ENCODE measurements at regions of chr12 and their contacts with region 1.

Region 1: DNA sequence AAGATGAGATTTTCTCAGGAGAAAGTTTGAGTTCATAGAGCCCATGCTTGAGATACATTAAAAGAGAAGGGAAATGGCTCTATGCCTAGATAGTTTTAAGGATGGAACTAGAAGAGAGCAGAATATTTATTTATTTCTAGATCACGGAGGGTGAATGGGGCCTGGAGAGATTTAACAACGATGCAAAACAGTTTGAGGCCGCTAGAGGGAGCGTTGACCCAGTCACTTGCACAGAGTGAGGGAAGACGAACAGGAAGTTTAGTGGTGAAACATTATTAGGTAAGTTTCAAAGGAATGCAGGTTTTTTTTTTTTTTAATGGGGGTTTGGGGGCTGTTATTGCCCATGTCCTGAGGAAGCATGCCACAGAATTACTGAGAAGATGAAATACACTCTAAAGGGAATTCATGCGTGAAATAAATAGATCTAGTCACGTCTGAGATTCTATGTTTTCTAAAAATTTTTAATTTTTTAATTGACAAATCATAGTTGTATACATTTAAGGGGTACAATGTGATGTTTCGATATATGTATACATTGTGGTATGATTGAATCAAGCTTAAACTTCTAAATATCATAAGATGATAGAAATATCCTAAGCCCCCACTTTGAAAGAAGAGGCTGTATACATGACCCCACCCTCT is 14.8 kb upstream of the PPP1R1A start:
- DNase-seq: peak in 1 of 2 experiments; percentile 72
- H3K4me3 ChIP-seq: no peak overlapping the region
- H3K27ac ChIP-seq: no peak overlapping the region
- H3K4me1 ChIP-seq: no peaks in the 10 kb centered on the region
- H3K27me3 ChIP-seq: peaks cover 0 to 8% (median 2%) of the 10 kb centered on the region in 4 experiments; a peak in 3 of 7 replicates
- CTCF ChIP-seq: peak; percentile 73 to 86 (median 82)
- EP300 ChIP-seq: no peak
- POLR2A ChIP-seq: no peak
- RAD21 ChIP-seq: peak; percentile 64 to 76

Region 2: DNA sequence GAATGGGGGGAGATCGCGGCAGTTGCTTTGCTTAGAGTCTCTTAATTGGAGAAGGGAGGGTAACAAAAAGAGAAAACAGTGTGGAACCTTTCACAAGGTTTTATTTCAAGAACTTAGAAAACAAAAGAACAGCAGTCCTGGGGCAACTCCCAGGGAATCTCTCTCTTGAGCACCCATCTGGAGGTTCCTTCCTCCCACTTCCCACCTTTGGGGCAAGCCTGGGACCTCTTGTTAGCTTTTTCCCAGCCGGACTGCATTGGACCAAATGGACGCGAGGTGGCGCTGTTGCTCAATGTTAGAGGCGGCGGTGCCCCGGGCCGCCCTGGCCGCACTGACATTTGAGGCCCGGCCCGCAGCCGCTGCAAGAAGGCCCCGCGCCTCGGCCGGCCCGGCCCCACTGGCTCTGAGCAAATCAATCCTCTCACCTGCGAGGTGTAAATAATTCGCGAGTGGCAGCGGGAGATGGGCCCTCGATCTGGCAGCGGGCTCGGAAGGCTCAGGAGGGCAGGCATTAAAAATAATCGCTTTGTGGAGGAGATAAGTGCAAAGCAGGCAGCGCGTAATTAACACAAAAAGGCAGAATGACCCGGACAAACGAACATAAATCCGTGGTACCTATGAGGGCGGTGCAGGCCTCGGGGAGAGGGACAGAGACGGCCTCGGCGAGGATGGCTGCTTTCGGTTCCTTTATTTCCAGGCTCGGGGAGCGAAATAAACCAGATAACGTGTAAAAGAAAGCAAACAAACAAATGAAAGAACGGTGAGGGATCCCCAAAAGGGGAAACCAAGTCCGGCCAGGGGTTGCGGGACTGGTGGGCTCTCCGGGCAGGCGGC is 597.2 kb before region 1 on chr12:
- CTCF ChIA-PET with region 1: no interaction called
- POLR2A ChIA-PET with region 1: no interaction called
- DNase-seq: peak; percentile 50 to 98
- H3K4me3 ChIP-seq: no peak overlapping the region
- H3K27ac ChIP-seq: no peak overlapping the region
- H3K4me1 ChIP-seq: peaks cover 0 to 4% (median 0%) of the 10 kb centered on the region in 4 experiments; a peak in 2 of 7 replicates
- H3K27me3 ChIP-seq: peaks cover 97 to 100% (median 100%) of the 10 kb centered on the region in 4 experiments
- CTCF ChIP-seq: peak; percentile 88 to 97 (median 89)
- EP300 ChIP-seq: no peak
- POLR2A ChIP-seq: no peak
- RAD21 ChIP-seq: peak; percentile 98

Region 3: DNA sequence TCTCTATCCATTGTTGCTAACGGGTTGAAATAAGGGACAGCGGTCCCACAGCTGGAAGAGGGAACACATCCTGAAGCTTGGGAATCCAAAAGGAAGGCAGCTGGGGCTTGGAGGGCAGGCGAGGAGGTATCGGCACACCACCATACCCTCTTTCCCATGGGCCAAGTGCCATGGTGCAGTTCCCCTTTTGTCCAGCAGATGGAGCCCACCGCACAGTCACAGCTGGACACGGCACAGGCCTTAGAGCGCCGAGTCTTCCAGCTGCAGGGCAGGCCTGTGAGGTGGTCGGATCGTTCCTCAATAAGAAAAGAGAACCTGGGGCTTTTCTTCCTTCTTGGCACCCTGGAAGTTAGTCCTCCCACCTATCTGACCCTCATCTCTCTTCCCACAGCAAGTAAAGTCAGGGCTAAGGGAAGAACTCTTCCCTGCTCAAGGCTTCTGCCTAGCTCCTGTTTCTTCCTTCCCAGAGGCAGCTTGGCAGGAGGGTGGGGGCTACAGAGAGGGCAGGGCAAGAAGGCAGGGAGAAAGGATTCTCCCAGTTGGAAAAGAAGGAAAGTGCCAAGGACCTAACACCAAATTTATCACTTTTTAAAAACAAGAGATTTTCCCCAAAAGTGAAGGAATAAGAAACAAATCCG is 23.5 kb before region 1 on chr12:
- CTCF ChIA-PET with region 1: interaction called, 57 read pairs
- POLR2A ChIA-PET with region 1: no interaction called
- DNase-seq: peak; percentile 67 to 99
- H3K4me3 ChIP-seq: no peak overlapping the region
- H3K27ac ChIP-seq: no peak overlapping the region
- H3K4me1 ChIP-seq: peaks cover 0 to 10% (median 3%) of the 10 kb centered on the region in 4 experiments; a peak in 5 of 7 replicates
- H3K27me3 ChIP-seq: no peaks in the 10 kb centered on the region; a peak in 1 of 7 replicates
- CTCF ChIP-seq: peak; percentile 94 to 100 (median 100)
- EP300 ChIP-seq: no peak
- POLR2A ChIP-seq: no peak
- RAD21 ChIP-seq: peak; percentile 86 to 90

Region 4: DNA sequence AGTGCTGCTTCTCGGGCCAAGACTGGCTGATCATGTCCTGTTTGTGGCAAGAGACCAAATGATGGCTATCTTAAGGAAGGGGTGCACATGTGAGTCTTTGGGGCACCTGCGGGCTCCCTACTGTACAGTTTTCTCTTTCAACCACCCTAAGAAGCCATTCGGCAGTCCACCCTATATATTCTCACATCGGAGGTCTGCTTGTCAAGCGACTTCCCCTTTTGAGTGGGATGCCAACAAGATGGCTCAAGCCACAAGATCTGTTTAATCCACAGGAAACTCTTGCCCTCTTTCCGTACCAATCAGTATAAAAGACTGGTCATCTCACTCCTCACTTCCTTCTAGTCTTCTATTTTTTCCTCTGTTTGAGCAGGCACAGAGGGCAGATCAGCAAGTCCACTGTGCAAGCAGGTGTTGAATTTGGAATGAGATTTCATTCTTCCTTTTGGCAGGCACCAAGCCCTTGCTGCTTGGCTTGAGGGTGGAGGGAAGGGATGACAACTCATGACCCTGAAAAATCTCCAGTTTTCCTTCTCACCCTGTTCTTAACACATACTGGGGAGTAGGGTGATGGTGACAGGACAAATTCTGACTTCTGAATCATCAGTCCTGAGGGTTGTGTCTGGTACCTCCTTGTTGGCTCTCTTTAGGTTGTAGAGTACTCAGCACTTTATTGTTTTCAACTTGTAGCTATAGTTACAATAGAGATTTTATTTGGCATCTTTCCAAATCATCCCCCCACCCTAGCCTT is 13.8 kb after region 1 on chr12:
- CTCF ChIA-PET with region 1: interaction called, 16 read pairs
- POLR2A ChIA-PET with region 1: no interaction called
- DNase-seq: no peak
- H3K4me3 ChIP-seq: no peak overlapping the region
- H3K27ac ChIP-seq: no peak overlapping the region
- H3K4me1 ChIP-seq: no peaks in the 10 kb centered on the region
- H3K27me3 ChIP-seq: peaks cover 5 to 28% (median 16%) of the 10 kb centered on the region in 4 experiments
- CTCF ChIP-seq: no peak
- EP300 ChIP-seq: no peak
- POLR2A ChIP-seq: no peak
- RAD21 ChIP-seq: no peak

Region 5: DNA sequence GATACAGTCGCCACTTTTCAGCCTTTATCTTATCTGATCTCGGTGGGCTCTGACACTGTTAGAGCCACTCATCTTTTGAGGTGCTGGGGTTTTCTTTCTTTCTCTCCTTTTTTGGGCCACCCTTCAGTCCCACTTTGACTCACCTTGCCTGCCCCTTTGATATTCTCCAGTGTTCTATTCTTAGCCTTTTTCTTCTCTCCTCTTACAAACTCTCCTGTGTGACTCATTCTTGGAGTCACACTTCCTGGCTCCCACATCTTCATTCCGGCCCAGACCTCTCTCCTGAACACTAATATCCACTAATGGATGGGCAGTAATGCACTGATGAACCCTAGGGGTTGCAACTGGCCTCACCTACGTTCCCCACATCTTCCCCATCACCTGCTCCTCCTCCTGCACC is 47.1 kb after region 1 on chr12:
- CTCF ChIA-PET with region 1: interaction called, 10 read pairs
- POLR2A ChIA-PET with region 1: no interaction called
- DNase-seq: no peak
- H3K4me3 ChIP-seq: no peak overlapping the region
- H3K27ac ChIP-seq: no peak overlapping the region
- H3K4me1 ChIP-seq: no peaks in the 10 kb centered on the region
- H3K27me3 ChIP-seq: no peaks in the 10 kb centered on the region
- CTCF ChIP-seq: no peak
- EP300 ChIP-seq: no peak
- POLR2A ChIP-seq: no peak
- RAD21 ChIP-seq: no peak

Region 6: DNA sequence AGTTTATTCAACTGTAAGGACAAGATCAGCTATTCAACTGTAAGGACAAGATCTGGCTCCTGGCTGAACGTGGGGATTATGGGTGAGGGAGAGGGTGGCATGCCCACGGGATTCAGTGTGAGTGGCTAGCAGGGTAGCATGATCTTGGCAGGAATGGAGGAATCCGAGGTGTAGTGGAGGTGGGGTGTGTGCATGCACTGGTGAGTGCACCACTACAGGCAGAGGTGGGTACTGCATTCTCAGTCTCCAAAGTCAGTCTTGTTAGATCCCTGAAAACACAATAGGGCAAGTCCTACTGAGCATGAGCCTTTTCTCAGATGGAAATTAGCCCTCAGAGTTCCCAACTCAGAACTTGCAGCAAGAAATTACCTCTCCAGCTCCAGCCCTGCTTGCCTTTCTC is 77.1 kb after region 1 on chr12:
- CTCF ChIA-PET with region 1: interaction called, 13 read pairs
- POLR2A ChIA-PET with region 1: no interaction called
- DNase-seq: peak; percentile 25 to 90
- H3K4me3 ChIP-seq: no peak overlapping the region
- H3K27ac ChIP-seq: no peak overlapping the region
- H3K4me1 ChIP-seq: peaks cover 12 to 23% (median 20%) of the 10 kb centered on the region in 4 experiments
- H3K27me3 ChIP-seq: no peaks in the 10 kb centered on the region; a peak in 1 of 7 replicates
- CTCF ChIP-seq: peak; percentile 46 to 92 (median 83)
- EP300 ChIP-seq: no peak
- POLR2A ChIP-seq: no peak
- RAD21 ChIP-seq: peak; percentile 21 to 37; a peak in 3 of 4 replicates

Measured in H1 (cell line).